ENCODE measurements at regions of chr3 and their contacts with region 1.

Region 1: DNA sequence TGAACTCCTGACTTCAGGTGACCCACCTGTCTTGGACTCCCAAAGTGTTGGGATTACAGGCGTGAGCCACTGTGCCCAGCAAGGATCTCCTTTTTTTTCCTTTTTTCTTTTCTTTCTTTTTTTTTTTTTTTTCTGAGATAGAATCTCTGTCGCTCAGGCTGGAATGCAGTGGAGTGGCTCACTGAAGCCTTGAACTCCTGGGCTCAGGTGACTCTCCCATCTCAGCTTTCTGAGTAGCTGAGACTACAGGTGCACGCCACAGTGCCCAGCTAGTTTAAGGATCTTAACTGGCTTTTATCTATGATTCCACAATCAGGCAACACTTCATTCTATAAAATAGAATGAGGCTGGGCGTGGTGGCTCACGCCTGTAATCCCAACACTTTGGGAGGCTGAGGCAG is 16.3 kb upstream of the NICN1 start:
- DNase-seq: no peak
- H3K4me3 ChIP-seq: no peak overlapping the region
- H3K27ac ChIP-seq: no peak overlapping the region
- H3K4me1 ChIP-seq: peaks cover 7 to 19% (median 8%) of the 10 kb centered on the region in 3 donors
- H3K27me3 ChIP-seq: no peaks in the 10 kb centered on the region
- CTCF ChIP-seq: no peak
- POLR2A ChIP-seq: no peak

Region 2: DNA sequence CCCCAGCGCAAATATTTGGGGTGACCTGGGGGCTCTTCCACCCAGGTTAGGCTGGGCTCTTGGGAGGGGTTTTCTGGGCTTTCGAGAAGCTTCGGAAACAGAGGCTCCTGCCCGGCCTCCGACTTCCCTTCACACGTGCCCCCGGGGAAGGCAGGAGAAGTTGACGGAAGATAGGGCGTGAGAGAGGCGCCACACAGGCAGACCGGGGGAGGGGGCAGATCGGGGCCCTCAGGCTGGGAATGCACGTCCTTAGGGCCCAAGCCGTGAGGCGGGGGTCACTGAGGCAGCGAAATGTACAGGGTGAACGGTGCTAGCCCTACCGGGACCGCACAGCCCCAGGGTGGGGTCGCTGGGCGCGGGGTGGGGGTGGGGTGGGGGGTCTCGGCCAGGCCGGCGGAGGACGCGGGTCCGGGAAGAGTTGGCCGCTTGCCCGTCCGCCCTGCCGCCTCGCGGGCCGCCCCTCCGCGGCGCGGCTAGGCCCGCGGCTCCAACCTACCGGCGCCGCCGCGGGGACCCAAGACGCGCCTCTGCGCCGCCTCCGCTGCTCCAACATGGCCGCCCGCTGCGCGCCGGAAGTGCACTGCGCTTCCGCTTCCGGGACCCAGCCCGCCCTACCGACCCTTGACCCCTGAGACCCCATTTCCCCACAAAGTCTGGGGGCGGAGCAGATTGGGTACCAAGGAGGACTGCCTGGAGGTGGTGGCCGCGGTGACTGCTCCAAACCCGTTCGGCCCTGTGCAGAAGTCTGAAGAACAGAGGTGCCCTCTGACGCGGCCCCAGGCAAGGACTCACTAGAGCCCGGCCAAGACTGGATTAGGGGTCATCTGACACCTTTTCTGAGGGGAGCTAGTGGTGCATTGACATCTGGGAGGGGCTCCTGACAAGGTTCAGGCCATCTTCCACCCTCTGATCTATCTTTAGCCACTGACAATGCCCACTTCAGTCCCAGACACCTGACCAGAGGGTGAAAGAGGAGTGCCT is 279.3 kb before region 1 on chr3 and contains the start of gene CCDC71:
- intact Hi-C with region 1: loop called (anchors 10 kb)
- DNase-seq: no peak
- H3K4me3 ChIP-seq: peak within 1 kb of the TSS; percentile 80 to 96 (median 86)
- H3K27ac ChIP-seq: peak within 1 kb of the TSS; percentile 86 to 96 (median 94)
- H3K4me1 ChIP-seq: peaks cover 20 to 44% (median 24%) of the 10 kb centered on the region in 3 donors
- H3K27me3 ChIP-seq: no peaks in the 10 kb centered on the region
- CTCF ChIP-seq: no peak
- POLR2A ChIP-seq: peak in 2 of 4 donors; percentile 56 to 67
- total RNA-seq, gene CCDC71: 17.0 to 31.1 (median 23.1) TPM

Region 3: DNA sequence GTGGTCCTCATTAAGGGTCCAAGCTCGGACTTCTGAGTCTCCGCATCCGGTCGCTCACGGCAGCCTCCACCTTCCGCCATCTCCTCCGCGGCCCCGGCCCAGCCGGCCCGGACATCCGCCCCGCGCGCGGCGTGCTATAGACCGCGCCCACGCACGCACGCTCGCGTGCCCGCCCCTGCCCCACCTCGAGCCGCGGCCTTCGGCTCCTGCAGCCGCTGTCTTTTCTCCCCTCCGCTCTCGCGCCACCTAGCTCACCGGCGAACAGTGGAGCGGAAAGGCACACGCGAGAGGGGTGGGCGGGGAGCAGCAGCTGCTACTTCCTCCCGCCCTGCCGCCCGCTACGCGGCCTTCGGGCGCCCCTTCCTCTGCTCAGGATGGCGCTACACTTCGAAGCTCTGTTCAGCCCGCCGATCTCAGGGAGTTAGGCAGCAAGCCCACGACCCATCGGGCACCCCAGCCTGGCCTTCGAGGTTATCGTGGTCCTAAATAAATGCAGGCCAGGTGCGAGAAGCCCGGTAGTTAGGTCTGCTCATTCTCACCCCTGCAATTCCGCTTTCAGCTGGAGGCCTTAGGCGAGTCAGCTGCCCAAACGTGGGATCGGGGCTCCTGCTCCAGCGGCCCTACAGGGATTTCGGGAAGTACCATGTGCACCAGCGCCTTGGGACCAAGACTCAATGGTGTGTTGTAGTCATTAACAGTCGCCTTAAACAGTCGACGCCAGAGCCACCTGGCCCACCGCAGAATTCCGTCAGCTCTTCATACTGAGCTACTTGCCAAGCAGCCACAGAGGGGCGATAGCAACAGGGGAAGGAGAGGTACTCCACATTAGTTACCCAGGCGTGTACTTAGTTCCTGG is 105.2 kb before region 1 on chr3 and contains the start of gene USP4:
- intact Hi-C with region 1: loop called (anchors 10 kb)
- DNase-seq: peak; percentile 66
- H3K4me3 ChIP-seq: peak within 1 kb of the TSS; percentile 70 to 91 (median 83)
- H3K27ac ChIP-seq: peak within 1 kb of the TSS; percentile 89 to 99 (median 96)
- H3K4me1 ChIP-seq: peaks cover 15 to 65% (median 24%) of the 10 kb centered on the region in 3 donors
- H3K27me3 ChIP-seq: no peaks in the 10 kb centered on the region
- CTCF ChIP-seq: peak in 5 of 6 experiments; percentile 36 to 83 (median 47)
- POLR2A ChIP-seq: peak in 2 of 4 donors; percentile 74 to 86
- total RNA-seq, gene USP4: 8.1 to 29.6 (median 19.3) TPM